ENCODE measurements at regions of chr17 and their contacts with region 1.

Region 1: DNA sequence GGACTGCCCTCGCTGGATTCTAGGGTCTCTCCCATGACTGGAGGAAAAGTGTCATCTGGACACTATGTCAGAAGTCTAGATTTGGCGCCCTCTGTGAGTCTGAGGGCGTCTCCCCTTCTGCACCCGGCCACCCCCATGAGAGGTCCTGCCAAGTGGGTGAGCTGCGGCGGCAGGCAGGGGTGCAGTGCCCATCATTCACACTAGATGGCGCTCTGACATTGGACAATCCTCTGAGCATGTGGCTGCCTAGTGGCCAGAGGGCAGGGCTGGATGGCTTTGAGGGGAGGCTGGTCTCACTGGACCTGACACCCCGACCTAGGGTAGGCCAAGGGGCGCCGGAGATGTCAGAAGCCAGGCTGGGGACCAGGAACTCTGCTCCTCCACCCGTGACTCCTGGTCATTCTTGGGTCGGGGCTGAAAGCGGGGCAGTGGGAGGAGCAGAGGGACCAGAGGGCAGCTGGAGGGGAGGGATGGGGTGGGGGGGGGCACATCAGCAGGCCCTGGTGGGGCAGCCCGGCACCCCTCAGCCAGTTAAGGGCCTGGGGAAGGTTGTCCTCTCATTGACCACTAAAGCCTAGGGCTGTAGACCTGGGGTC is 28.0 kb downstream of the MRM1 start:
- DNase-seq: peak; percentile 66 to 76 (median 75)
- H3K4me3 ChIP-seq: no peak overlapping the region
- H3K27ac ChIP-seq: no peak overlapping the region
- H3K4me1 ChIP-seq: no peaks in the 10 kb centered on the region
- H3K27me3 ChIP-seq: peaks cover 0 to 11% (median 9%) of the 10 kb centered on the region in 5 experiments

Region 2: GRCh38 chr17:36601303-36602029 is 27.9 kb before region 1 on chr17 and contains the start of gene MRM1:
- CTCF ChIA-PET with region 1: interaction called, 16 read pairs
- POLR2A ChIA-PET with region 1: no interaction called
- DNase-seq: peak; percentile 84 to 90 (median 87)
- H3K4me3 ChIP-seq: peak within 1 kb of the TSS; percentile 80 to 97 (median 90)
- H3K27ac ChIP-seq: peak within 1 kb of the TSS; percentile 67 to 82
- H3K4me1 ChIP-seq: peaks cover 8 to 38% (median 30%) of the 10 kb centered on the region in 4 experiments
- H3K27me3 ChIP-seq: no peaks in the 10 kb centered on the region

Region 3: GRCh38 chr17:36614933-36615332 is 14.4 kb before region 1 on chr17:
- CTCF ChIA-PET with region 1: interaction called, 10 read pairs
- POLR2A ChIA-PET with region 1: no interaction called
- DNase-seq: no peak
- H3K4me3 ChIP-seq: no peak overlapping the region
- H3K27ac ChIP-seq: no peak overlapping the region
- H3K4me1 ChIP-seq: no peaks in the 10 kb centered on the region
- H3K27me3 ChIP-seq: no peaks in the 10 kb centered on the region

Region 4: DNA sequence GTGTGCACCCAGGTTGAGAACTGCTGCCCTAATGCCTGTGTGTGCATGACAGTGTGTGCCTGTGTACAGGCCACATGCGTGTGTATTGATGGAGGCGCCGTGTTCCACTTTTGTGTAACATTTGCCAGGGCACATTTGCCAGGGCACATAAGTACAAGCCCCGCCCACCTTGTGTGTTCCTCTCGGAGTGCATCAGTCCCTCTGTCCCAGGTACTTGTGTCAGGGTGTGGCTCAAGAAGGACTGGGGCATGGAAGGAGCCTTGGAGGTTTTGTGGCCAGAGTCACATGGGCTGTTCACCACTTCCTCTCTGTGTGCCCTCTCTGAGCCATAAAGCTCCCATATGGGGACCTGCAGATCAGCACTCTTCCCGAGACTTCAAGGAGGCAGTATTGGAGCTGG is 45.9 kb after region 1 on chr17:
- CTCF ChIA-PET with region 1: no interaction called
- POLR2A ChIA-PET with region 1: no interaction called
- DNase-seq: no peak
- H3K4me3 ChIP-seq: no peak overlapping the region
- H3K27ac ChIP-seq: no peak overlapping the region
- H3K4me1 ChIP-seq: peaks cover 0 to 7% (median 0%) of the 10 kb centered on the region in 4 experiments
- H3K27me3 ChIP-seq: peaks cover 0 to 6% (median 0%) of the 10 kb centered on the region in 5 experiments

Region 5: DNA sequence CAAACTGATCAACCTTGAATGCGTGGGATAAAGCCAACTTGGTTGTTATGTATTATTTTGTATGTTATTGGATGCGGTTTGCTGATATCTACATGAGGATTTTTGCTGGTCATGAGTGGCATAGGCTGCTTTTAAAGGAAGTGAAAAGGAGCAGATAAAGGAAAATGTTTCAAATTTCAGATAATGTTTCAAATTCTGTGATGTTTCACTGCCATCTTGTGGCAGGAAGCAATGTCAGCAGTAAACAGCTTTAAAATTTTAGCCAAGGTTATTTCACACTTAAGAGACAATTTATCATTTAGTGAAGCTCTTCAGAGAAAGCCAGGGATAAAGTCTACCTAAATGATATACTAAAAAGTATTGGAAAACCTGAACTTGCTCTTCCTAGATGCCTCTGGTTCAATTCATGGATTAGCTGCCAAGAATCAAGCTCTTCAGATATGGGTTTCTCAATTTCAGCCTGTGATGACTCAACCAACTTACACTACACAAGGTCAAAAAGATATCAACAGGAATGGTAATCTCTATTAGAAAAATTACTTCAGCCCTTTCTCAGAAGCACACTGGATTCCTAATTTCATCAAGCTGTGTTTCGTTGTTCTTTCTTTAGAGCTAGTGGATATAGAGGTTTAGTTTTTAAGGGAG is 610.5 kb after region 1 on chr17:
- CTCF ChIA-PET with region 1: interaction called, 13 read pairs
- POLR2A ChIA-PET with region 1: no interaction called
- DNase-seq: peak; percentile 34 to 55 (median 50)
- H3K4me3 ChIP-seq: no peak overlapping the region
- H3K27ac ChIP-seq: no peak overlapping the region
- H3K4me1 ChIP-seq: no peaks in the 10 kb centered on the region
- H3K27me3 ChIP-seq: no peaks in the 10 kb centered on the region